ENCODE measurements at regions of chr5 and their contacts with region 1.

Region 1: DNA sequence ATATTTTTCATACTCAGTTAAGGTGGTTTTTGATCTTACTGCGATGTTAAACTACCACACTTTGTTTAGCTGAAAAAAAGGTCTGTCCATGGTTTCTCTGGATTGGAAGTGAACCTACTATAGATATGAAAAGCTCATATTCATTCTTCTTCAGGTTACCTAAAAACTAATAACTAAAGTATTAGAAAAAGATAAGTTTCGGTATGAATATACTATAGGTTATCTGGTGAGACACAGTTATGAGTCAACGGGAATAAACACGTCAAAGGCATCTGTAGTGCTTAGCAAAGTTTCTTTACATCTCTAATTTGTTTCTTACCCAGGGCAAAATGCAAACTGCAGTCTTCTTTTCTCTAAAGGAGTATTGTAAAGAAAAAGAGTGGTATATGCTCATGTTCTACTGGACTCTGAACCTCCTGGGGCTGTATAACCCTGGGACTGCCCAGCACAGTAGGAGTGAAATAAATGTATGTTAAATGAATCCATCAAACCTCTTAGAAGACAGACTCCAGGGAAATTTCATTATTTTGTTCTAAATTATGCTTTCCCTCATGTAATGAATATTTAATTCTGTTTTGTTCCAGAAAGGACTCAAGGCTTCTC is 521.9 kb downstream of the PDE4D start:
- DNase-seq: no peak
- CTCF ChIP-seq: no peak

Region 2: DNA sequence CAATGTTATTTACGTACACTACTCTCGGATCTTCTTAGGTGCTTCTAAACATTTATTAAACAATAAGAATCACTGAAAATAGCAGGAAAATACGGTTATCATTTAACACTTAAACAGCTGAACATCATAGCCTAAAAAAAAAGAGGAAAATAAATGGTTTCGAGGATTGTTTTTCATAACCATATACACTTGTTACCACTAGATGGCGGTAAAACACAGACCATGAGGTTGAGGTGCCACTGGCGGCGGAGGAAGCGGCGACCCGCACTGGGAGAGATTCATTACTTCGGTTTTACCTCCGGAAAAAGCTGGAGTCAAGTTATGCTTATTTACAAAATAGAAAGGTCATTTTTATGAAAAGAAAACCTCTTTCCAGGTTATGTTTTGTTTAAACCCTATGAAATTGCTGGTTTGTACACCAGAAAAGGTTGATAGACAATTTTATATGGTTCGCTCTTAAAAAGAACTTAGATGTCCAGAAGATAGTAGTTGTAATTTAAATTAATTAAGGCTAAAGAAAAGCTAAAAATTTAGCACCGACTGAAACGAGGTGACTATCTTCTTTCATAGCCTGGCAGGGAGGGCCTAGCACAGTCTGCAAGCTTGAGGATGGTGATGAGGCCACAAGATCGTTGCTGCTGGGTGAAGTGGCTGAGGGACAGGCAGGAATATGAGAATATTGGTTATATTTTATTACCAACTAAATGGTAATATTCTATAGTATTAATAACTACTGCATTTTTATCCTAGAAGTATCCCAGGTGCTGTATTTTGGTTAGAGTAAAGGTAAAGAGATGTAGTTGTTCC is 183.0 kb before region 1 on chr5:
- in situ Hi-C with region 1: loop called (anchors 10 kb)
- DNase-seq: peak; percentile 19
- CTCF ChIP-seq: peak; percentile 62

Region 3: DNA sequence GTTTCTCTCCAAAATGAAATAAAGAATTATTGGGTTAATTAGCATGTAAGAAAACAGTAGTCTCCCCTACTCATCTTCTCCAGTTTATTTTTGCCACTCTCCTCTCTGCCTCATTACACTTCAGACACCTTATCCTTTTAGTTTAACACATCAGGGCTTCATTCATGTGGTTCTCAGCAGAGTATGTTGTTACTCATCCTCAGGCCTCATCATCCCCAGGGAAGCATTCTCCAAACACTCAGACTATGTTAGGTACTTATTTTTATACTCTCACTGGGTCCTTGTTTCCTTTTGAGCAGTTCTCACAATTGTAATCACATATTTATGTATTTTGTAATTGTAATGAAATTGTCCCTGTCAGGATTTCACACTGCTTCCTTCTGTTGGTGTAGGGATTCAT is 51.4 kb after region 1 on chr5:
- in situ Hi-C with region 1: no loop called
- DNase-seq: no peak
- CTCF ChIP-seq: no peak

Measured in GM13977 (cell line).